ENCODE measurements at regions of chr10 and their contacts with region 1.

Region 1: GRCh38 chr10:71771821-71772617 is 1.3 kb downstream of the VSIR start:
- DNase-seq: peak; percentile 27
- ATAC-seq: no peak
- H3K4me3 ChIP-seq: peak overlapping the region; percentile 82 to 97 (median 90)
- H3K4me3 Mint-ChIP-seq: peak overlapping the region; percentile 94
- H3K27ac ChIP-seq: peak overlapping the region; percentile 88 to 95
- H3K27ac Mint-ChIP-seq: peak overlapping the region; percentile 92
- H3K4me1 ChIP-seq: peaks cover 90 to 98% of the 10 kb centered on the region in 2 donors
- H3K4me1 Mint-ChIP-seq: peaks cover 93% of the 10 kb centered on the region
- H3K27me3 ChIP-seq: no peaks in the 10 kb centered on the region
- H3K27me3 Mint-ChIP-seq: no peaks in the 10 kb centered on the region
- CTCF ChIP-seq: no peak

Region 2: DNA sequence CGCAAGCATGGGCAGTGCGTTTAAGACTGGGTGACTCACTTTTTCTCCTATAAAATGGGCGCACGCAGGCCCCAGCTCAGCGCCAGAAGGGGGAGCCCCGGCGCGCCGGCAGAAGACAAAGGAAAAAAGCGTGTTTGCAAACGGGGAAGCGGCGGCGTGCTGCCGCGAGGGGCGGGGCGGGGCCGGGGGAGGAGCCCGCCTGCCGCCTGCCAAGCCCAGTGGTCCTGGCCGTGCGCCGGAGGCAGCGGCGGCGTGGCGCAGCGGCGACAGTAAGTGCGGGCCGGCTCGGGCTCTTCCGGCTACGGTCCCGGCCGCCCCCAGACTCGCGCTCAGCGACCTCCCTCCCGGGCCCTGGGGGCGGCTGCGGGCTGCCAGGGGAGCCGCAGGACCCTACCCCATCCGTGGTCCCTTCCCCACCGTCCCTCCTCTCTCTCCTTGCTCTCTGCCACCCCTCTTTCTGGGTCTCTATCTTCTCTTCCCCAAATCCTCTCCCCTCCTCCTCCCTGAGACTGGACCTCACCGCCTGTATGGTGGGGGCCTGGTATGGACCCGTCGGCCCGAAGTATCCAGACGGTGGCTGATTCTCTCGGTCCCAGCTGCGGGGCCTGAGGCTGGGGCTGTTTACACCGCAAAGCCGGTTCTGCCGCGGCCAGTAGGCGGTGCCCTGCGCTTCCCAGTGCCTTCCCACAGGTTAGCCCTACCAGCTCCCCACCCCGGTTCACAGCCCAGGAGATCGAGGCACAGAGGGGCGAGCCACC is 452.8 kb before region 1 on chr10 and contains the start of gene SLC29A3:
- CTCF ChIA-PET with region 1: interaction called, 5 read pairs
- POLR2A ChIA-PET with region 1: no interaction called
- intact Hi-C with region 1: loop called (anchors 1 kb)
- DNase-seq: peak; percentile 88
- ATAC-seq: peak; percentile 90
- H3K4me3 ChIP-seq: peak within 1 kb of the TSS; percentile 34 to 84 (median 78)
- H3K4me3 Mint-ChIP-seq: peak within 1 kb of the TSS; percentile 99
- H3K27ac ChIP-seq: peak within 1 kb of the TSS in 1 of 2 donors; percentile 72
- H3K27ac Mint-ChIP-seq: peak within 1 kb of the TSS; percentile 94
- H3K4me1 ChIP-seq: peaks cover 8 to 18% of the 10 kb centered on the region in 2 donors
- H3K4me1 Mint-ChIP-seq: peaks cover 17% of the 10 kb centered on the region
- H3K27me3 ChIP-seq: no peaks in the 10 kb centered on the region
- H3K27me3 Mint-ChIP-seq: no peaks in the 10 kb centered on the region
- CTCF ChIP-seq: peak; percentile 71
- total RNA-seq, gene SLC29A3: 6.7 and 8.2 TPM in 2 replicates

Region 3: DNA sequence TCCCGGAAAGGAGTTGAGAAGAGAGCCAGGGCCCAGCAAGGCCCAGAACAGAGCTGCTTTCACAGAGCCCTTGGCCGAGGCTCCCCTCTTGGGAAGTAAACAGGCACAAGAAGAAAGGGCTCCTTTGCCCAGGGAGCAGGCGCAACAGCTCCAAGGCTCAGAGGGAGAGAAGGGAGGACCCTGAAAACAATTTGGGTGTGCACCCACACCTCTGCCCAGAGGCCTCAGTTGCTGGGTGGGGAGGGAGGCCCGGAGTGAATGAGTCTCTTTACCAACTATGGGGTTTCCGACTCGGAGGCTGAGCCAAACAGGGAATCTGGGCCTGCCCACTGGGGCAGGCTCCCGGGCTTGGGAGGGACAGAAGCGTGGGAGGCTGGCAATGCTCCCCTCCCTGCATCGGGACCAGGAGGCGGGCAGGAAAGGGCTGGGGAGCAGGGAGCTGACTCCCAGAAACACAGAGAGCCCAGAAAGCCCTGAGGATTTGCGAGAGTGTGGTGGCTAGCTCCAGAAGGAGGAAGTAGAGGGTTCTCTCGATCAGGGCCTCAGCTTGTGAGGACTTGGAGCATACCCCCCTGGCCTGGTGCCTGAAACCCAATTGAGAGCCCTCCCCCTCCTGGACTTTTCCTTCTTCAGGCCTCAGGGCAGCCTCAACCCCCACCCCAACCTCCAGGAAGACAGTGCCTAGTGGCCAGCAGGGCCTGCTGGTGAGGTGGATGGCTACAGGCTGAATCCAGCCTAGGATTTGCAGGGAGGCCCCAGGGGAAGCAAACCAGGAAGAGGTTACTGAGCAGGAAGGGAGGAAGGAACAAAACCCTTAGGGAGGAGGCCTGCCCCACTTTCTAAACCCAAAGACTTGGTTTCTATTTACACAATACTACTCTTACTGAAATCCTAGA is 58.6 kb before region 1 on chr10:
- CTCF ChIA-PET with region 1: interaction called, 25 read pairs
- POLR2A ChIA-PET with region 1: interaction called, 4 read pairs
- intact Hi-C with region 1: no loop called
- DNase-seq: peak; percentile 41
- ATAC-seq: peak; percentile 41
- H3K4me3 ChIP-seq: no peak overlapping the region
- H3K4me3 Mint-ChIP-seq: peak overlapping the region; percentile 29
- H3K27ac ChIP-seq: no peak overlapping the region
- H3K27ac Mint-ChIP-seq: peak overlapping the region; percentile 83
- H3K4me1 ChIP-seq: peaks cover 35 to 46% of the 10 kb centered on the region in 2 donors
- H3K4me1 Mint-ChIP-seq: peaks cover 41% of the 10 kb centered on the region
- H3K27me3 ChIP-seq: no peaks in the 10 kb centered on the region
- H3K27me3 Mint-ChIP-seq: no peaks in the 10 kb centered on the region
- CTCF ChIP-seq: no peak

Region 4: GRCh38 chr10:71748671-71749191 is 23.3 kb before region 1 on chr10:
- CTCF ChIA-PET with region 1: interaction called, 26 read pairs
- POLR2A ChIA-PET with region 1: interaction called, 9 read pairs
- intact Hi-C with region 1: loop called (anchors 1 kb)
- DNase-seq: peak; percentile 84
- ATAC-seq: peak; percentile 80
- H3K4me3 ChIP-seq: peak overlapping the region in 1 of 5 experiments; percentile 15
- H3K4me3 Mint-ChIP-seq: peak overlapping the region; percentile 84
- H3K27ac ChIP-seq: peak overlapping the region; percentile 72 to 84
- H3K27ac Mint-ChIP-seq: peak overlapping the region; percentile 100
- H3K4me1 ChIP-seq: peaks cover 83 to 92% of the 10 kb centered on the region in 2 donors
- H3K4me1 Mint-ChIP-seq: peaks cover 89% of the 10 kb centered on the region
- H3K27me3 ChIP-seq: no peaks in the 10 kb centered on the region
- H3K27me3 Mint-ChIP-seq: no peaks in the 10 kb centered on the region
- CTCF ChIP-seq: no peak

Region 5: DNA sequence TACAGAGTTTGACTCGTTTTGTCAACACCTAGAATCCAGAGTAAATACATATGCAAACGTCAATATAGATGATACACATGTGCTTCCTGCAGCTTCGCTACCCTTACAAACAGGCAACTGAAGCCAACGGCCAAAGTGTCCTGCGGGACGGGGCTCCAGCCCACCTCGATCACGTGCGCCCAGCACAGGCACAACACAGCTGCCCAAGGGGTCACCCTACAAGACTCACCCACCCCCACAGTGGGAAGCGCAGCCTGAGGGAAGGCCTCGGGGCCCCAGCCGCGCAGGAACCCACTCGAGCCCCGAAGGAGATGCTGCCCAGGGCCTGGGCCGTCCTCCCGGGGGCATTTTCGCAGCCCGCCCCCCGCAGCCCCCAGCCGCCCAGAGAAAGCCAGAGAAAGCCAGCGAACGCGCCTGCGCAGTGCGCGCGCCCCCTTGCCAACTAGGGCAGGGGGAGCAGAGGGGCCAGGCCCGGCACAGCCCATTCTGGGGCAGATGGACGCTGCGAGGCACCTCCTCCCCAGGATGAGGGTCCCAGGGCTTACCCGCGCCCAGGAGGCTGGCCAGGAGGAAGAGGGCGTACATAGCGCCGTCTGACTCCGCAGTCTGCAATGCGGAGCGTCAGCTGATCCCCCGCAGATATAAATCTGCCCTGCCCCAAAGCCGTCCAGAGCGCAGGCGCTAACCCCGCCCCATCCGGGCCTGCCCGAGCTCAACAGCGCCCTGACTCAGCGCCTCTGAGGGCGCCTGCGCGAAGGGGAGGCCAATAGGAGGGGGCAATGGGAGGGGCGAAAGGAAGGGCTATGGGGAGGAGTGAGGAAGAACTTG is 78.8 kb after region 1 on chr10 and contains the start of gene PSAP:
- CTCF ChIA-PET with region 1: no interaction called
- POLR2A ChIA-PET with region 1: no interaction called
- intact Hi-C with region 1: loop called (anchors 1 kb)
- DNase-seq: peak; percentile 96
- ATAC-seq: peak; percentile 97
- H3K4me3 ChIP-seq: peak within 1 kb of the TSS; percentile 72 to 95 (median 91)
- H3K4me3 Mint-ChIP-seq: peak within 1 kb of the TSS; percentile 99
- H3K27ac ChIP-seq: peak within 1 kb of the TSS; percentile 65 to 91
- H3K27ac Mint-ChIP-seq: peak within 1 kb of the TSS; percentile 94
- H3K4me1 ChIP-seq: peaks cover 35 to 51% of the 10 kb centered on the region in 2 donors
- H3K4me1 Mint-ChIP-seq: peaks cover 57% of the 10 kb centered on the region
- H3K27me3 ChIP-seq: no peaks in the 10 kb centered on the region
- H3K27me3 Mint-ChIP-seq: no peaks in the 10 kb centered on the region
- CTCF ChIP-seq: no peak
- total RNA-seq, gene PSAP: 509 and 536 TPM in 2 replicates